ENCODE measurements at regions of chr2 and their contacts with region 1.

Region 1: GRCh38 chr2:231709981-231710798 is 1.9 kb downstream of the PTMA start:
- DNase-seq: no peak
- H3K4me3 ChIP-seq: peak overlapping the region; percentile 78 to 100 (median 94)
- H3K27ac ChIP-seq: peak overlapping the region; percentile 98 to 100 (median 100)
- H3K4me1 ChIP-seq: peaks cover 47 to 64% (median 62%) of the 10 kb centered on the region in 4 donors
- H3K27me3 ChIP-seq: no peaks in the 10 kb centered on the region
- CTCF ChIP-seq: peak; percentile 84 to 93 (median 88)
- EP300 ChIP-seq: no peak
- POLR2A ChIP-seq: peak; percentile 63

Region 2: GRCh38 chr2:231334179-231334930 is 375.8 kb before region 1 on chr2:
- intact Hi-C with region 1: no loop called
- DNase-seq: no peak
- H3K4me3 ChIP-seq: no peak overlapping the region
- H3K27ac ChIP-seq: no peak overlapping the region
- H3K4me1 ChIP-seq: peaks cover 0 to 4% (median 0%) of the 10 kb centered on the region in 4 donors
- H3K27me3 ChIP-seq: no peaks in the 10 kb centered on the region
- CTCF ChIP-seq: no peak
- EP300 ChIP-seq: no peak
- POLR2A ChIP-seq: no peak

Region 3: GRCh38 chr2:231482806-231483391 is 227.3 kb before region 1 on chr2:
- intact Hi-C with region 1: loop called (anchors 10 kb)
- DNase-seq: peak; percentile 94
- H3K4me3 ChIP-seq: peak overlapping the region; percentile 49 to 58 (median 53)
- H3K27ac ChIP-seq: peak overlapping the region; percentile 68 to 78 (median 72)
- H3K4me1 ChIP-seq: peaks cover 0 to 23% (median 18%) of the 10 kb centered on the region in 4 donors
- H3K27me3 ChIP-seq: no peaks in the 10 kb centered on the region
- CTCF ChIP-seq: peak in 2 of 3 experiments; percentile 77 to 79
- EP300 ChIP-seq: no peak
- POLR2A ChIP-seq: no peak

Region 4: DNA sequence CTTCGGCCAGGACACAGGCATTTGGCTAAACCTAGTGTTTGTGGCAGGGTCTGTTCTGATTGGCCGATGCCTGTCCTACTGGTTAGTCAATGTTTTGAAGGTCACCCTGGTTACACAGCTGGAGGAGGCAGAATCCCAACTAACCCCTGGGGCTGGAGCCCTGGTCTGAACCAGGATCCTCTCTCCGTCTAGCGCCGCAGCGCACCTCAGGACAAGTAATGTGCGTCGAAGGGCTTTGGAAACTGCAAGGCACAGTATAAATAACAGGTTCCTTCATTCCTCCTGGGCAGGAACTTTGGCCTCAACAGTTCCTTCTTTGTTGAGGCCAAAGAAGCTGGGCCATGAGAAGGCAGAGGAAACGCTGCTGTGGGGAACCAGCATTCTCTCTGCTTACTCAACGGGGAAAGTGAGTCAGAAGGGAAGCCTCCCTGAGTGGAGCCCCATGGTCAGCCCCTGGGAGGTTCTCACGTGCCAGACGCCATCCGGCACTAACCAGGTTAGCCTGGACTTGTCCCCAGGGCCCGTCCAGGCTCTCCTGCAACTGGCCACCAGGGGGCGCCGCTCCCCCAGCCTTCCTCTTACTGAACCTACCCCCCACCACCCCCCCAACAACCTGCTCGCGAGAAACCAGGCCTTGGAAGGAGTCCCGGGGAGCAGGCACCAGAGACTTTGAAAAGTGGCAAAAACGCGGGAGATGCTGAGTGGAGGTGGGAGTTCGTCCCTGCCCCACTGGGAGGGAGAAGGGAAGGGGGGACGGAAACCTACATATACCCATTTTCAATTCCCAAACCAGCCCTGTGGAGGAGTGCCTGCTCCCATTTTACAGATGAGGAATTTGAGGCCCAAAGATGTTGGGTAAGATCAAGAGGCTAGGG is 97.8 kb before region 1 on chr2:
- intact Hi-C with region 1: loop called (anchors 2 kb)
- DNase-seq: peak; percentile 98
- H3K4me3 ChIP-seq: peak overlapping the region in 1 of 4 donors; percentile 24
- H3K27ac ChIP-seq: peak overlapping the region; percentile 97 to 100 (median 98)
- H3K4me1 ChIP-seq: peaks cover 49 to 65% (median 53%) of the 10 kb centered on the region in 4 donors
- H3K27me3 ChIP-seq: no peaks in the 10 kb centered on the region
- CTCF ChIP-seq: peak; percentile 98 to 99 (median 98)
- EP300 ChIP-seq: no peak
- POLR2A ChIP-seq: no peak

Region 5: GRCh38 chr2:231674587-231675338 is 35.4 kb before region 1 on chr2:
- intact Hi-C with region 1: loop called (anchors 1 kb)
- DNase-seq: no peak
- H3K4me3 ChIP-seq: no peak overlapping the region
- H3K27ac ChIP-seq: peak overlapping the region; percentile 82 to 94 (median 88)
- H3K4me1 ChIP-seq: peaks cover 57 to 66% (median 61%) of the 10 kb centered on the region in 4 donors
- H3K27me3 ChIP-seq: no peaks in the 10 kb centered on the region
- CTCF ChIP-seq: peak; percentile 82 to 94 (median 94)
- EP300 ChIP-seq: no peak
- POLR2A ChIP-seq: no peak

Region 6: GRCh38 chr2:231877533-231878456 is 167.6 kb after region 1 on chr2:
- intact Hi-C with region 1: no loop called
- DNase-seq: no peak
- H3K4me3 ChIP-seq: no peak overlapping the region
- H3K27ac ChIP-seq: no peak overlapping the region
- H3K4me1 ChIP-seq: no peaks in the 10 kb centered on the region
- H3K27me3 ChIP-seq: peaks cover 0 to 52% (median 3%) of the 10 kb centered on the region in 4 donors
- CTCF ChIP-seq: no peak
- EP300 ChIP-seq: no peak
- POLR2A ChIP-seq: no peak

Measured in esophagus muscularis mucosa (tissue), 4 donors.